Spleen (tissue), 13 donors: ENCODE measurements at regions of chr7 and their contacts with region 1.

Region 1: DNA sequence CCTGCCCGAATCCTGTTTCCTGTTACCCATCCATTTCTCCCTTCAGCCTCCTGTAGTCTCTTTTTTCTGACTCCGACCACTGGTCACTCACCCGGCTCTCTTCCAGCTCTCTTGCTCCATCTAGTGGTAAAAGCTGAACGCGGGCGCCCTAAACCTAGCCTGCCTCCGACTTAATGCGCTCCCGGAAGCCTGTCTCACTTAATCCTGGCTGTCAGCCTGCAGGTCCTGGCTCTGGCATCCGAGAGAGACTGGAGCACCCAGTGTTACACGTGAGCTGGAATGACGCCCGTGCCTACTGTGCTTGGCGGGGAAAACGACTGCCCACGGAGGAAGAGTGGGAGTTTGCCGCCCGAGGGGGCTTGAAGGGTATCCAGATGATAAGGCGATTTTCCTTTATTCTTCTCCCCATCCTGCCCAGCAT is 10.3 kb downstream of the SUMF2 start:
- DNase-seq: peak; percentile 92
- H3K4me3 ChIP-seq: no peak overlapping the region
- H3K27ac ChIP-seq: no peak overlapping the region
- H3K4me1 ChIP-seq: peaks cover 0 to 13% (median 1%) of the 10 kb centered on the region in 6 donors
- H3K27me3 ChIP-seq: no peaks in the 10 kb centered on the region
- CTCF ChIP-seq: peak; percentile 86 to 97 (median 91)
- POLR2A ChIP-seq: no peak

Region 2: GRCh38 chr7:55641273-55641691 is 433.1 kb before region 1 on chr7:
- intact Hi-C with region 1: loop called (anchors 10 kb)
- DNase-seq: no peak
- H3K4me3 ChIP-seq: no peak overlapping the region
- H3K27ac ChIP-seq: no peak overlapping the region
- H3K4me1 ChIP-seq: peaks cover 0 to 14% (median 9%) of the 10 kb centered on the region in 6 donors
- H3K27me3 ChIP-seq: no peaks in the 10 kb centered on the region
- CTCF ChIP-seq: peak; percentile 48 to 92 (median 73)
- POLR2A ChIP-seq: no peak

Region 3: GRCh38 chr7:56003749-56004148 is 70.6 kb before region 1 on chr7:
- intact Hi-C with region 1: loop called (anchors 5 kb)
- DNase-seq: no peak
- H3K4me3 ChIP-seq: no peak overlapping the region
- H3K27ac ChIP-seq: no peak overlapping the region
- H3K4me1 ChIP-seq: peaks cover 3 to 23% (median 9%) of the 10 kb centered on the region in 6 donors
- H3K27me3 ChIP-seq: no peaks in the 10 kb centered on the region
- CTCF ChIP-seq: no peak
- POLR2A ChIP-seq: no peak